ENCODE measurements at regions of chr2 and their contacts with region 1.

Region 1: GRCh38 chr2:122340246-122340645 is 584.8 kb downstream of the TSN start:
- DNase-seq: peak; percentile 39
- ATAC-seq: peak; percentile 97
- H3K4me3 ChIP-seq: no peak overlapping the region
- H3K27ac ChIP-seq: no peak overlapping the region
- H3K4me1 ChIP-seq: peaks cover 6% of the 10 kb centered on the region
- H3K27me3 ChIP-seq: no peaks in the 10 kb centered on the region
- CTCF ChIP-seq: no peak
- EP300 ChIP-seq: peak; percentile 79 to 91; a peak in 3 of 4 replicates
- POLR2A ChIP-seq: no peak
- RAD21 ChIP-seq: no peak

Region 2: DNA sequence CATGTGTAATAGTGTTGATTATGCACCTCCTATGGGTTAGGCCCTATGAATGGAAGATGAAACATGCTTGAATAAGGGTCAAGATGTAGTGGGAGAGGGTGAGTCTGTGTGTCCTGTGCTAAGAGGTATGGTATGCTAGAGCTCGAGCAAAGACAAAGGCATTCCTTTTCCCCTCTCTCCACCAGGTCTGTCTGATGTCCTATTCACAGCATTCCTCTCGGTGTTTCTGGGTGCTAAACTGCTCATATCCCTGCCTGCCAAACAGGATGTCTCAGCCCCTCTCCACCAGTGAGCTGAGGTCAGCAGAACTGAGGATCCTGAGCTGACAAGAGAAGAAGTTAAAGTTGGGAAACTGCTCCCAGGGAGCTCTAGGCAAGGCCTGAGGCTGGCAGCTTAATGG is 239.9 kb before region 1 on chr2:
- CTCF ChIA-PET with region 1: no interaction called
- POLR2A ChIA-PET with region 1: no interaction called
- RAD21 ChIA-PET with region 1: no interaction called
- SMC1A ChIA-PET with region 1: no interaction called
- in situ Hi-C with region 1: no loop called
- intact Hi-C with region 1: no loop called
- DNase-seq: no peak
- ATAC-seq: no peak
- H3K4me3 ChIP-seq: no peak overlapping the region
- H3K27ac ChIP-seq: no peak overlapping the region
- H3K4me1 ChIP-seq: no peaks in the 10 kb centered on the region
- H3K27me3 ChIP-seq: no peaks in the 10 kb centered on the region
- CTCF ChIP-seq: no peak
- EP300 ChIP-seq: no peak
- POLR2A ChIP-seq: no peak
- RAD21 ChIP-seq: no peak

Region 3: DNA sequence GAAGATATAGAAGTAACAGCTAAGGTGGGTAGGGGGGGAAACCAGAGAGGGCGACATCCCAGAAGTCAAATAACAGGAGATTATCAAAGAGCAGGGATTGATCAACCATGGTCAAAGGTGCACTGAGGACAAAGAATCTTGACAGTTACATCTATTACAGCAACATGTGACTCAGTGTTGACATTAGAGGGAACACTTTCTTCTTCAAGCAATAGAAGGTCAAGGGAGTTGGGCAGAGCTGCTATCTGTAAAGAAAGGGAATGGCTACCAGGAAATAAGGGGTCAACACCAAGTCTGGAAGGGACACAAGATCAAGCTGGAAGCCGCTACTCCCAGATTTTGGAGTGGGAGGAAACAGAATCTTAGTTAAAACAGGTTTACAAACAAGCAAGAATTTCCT is 26.2 kb after region 1 on chr2:
- CTCF ChIA-PET with region 1: interaction called, 3 read pairs
- POLR2A ChIA-PET with region 1: no interaction called
- RAD21 ChIA-PET with region 1: interaction called, 3 read pairs
- SMC1A ChIA-PET with region 1: interaction called, 11 read pairs
- in situ Hi-C with region 1: no loop called
- intact Hi-C with region 1: no loop called
- DNase-seq: no peak
- ATAC-seq: no peak
- H3K4me3 ChIP-seq: no peak overlapping the region
- H3K27ac ChIP-seq: no peak overlapping the region
- H3K4me1 ChIP-seq: no peaks in the 10 kb centered on the region
- H3K27me3 ChIP-seq: no peaks in the 10 kb centered on the region
- CTCF ChIP-seq: no peak
- EP300 ChIP-seq: no peak
- POLR2A ChIP-seq: no peak
- RAD21 ChIP-seq: no peak